A549 (cell line): ENCODE measurements at regions of chr11 and their contacts with region 1.

Region 1: GRCh38 chr11:10735481-10736475 is 15.3 kb upstream of the CTR9 start:
- DNase-seq: peak; percentile 93 to 97
- ATAC-seq: peak; percentile 98 to 99
- H3K4me3 ChIP-seq: peak overlapping the region; percentile 27
- H3K27ac ChIP-seq: peak overlapping the region; percentile 77 to 88
- H3K4me1 ChIP-seq: peaks cover 13% of the 10 kb centered on the region
- CTCF ChIP-seq: peak; percentile 99
- EP300 ChIP-seq: no peak
- POLR2A ChIP-seq: no peak
- RAD21 ChIP-seq: peak; percentile 98 to 100

Region 2: DNA sequence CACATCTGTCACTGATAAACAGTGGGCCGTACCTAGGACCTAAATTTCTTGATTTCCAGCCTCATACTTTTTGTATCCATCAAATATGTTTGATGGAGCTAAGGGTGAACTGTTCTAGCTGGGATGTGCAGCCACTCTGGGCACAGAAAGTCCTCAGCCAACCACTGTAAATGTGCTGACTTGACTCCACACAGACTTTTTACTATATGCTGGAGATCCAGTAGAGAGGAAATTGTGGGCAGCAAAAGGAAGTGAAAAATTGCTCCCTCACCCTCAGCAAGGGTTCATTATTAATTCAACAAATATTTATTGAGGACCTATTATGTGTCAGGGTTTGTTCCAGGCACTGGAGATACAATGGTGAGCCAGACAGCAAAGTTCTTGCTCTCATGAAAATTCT is 334.9 kb before region 1 on chr11:
- CTCF ChIA-PET with region 1: interaction called, 39 read pairs
- POLR2A ChIA-PET with region 1: no interaction called
- DNase-seq: no peak
- ATAC-seq: no peak
- H3K4me3 ChIP-seq: no peak overlapping the region
- H3K27ac ChIP-seq: peak overlapping the region; percentile 18 to 64; a peak in 4 of 6 replicates
- H3K4me1 ChIP-seq: peaks cover 16% of the 10 kb centered on the region
- CTCF ChIP-seq: no peak
- EP300 ChIP-seq: no peak
- POLR2A ChIP-seq: no peak
- RAD21 ChIP-seq: no peak

Region 3: GRCh38 chr11:10514210-10514609 is 221.6 kb before region 1 on chr11:
- CTCF ChIA-PET with region 1: interaction called, 51 read pairs
- POLR2A ChIA-PET with region 1: no interaction called
- DNase-seq: peak in 1 of 2 experiments; percentile 12
- ATAC-seq: no peak
- H3K4me3 ChIP-seq: no peak overlapping the region
- H3K27ac ChIP-seq: no peak overlapping the region
- H3K4me1 ChIP-seq: peaks cover 11% of the 10 kb centered on the region
- CTCF ChIP-seq: peak; percentile 51
- EP300 ChIP-seq: no peak
- POLR2A ChIP-seq: no peak
- RAD21 ChIP-seq: peak; percentile 40 to 66; a peak in 4 of 5 replicates

Region 4: DNA sequence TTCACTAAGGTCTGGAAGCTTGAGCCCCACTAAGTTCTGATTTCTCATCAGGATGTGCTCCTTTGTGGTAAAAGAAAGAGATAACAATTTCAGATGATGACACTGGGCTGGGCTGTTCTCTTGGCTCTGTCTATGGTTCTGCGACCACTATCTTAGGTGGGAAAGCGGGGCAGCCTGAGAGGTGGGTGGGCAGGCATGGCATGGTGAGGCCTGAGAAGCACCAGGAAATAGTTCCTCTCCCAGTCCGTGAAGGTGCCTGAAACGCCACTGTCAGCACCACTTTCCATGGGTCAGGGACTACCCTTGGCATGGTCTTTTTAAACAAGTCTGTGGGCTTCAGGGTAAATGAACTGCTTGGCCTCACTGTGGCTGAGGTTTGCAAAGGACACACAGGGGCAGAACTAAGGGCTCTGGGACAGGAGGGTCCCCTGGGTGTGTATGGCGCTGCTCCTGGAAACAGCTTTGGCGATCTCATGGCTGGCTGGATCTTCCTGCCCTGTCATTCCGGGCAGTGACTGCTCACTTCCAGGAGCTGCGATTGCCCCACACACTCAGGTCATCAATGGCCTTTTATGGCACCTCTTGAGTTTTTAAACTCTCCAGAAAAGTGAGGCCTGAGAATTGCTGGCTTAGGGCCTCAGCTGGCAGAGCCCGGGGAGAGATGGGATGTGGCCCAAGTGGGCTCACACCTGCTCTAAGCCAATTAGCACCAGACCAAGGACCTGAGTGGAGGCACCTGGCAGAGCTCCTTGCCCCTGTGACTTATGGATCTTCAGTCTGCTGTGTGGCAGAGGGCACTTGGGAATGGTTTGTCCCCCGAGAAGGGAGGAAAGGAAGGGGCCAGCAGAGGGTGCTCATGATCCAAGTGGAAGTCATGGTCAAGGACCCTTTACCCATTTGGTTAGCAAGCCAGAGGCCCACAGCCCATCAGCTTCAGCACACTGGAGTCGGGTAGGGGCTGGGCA is 111.7 kb before region 1 on chr11:
- CTCF ChIA-PET with region 1: interaction called, 48 read pairs
- POLR2A ChIA-PET with region 1: no interaction called
- DNase-seq: peak; percentile 46 to 57
- ATAC-seq: peak; percentile 48 to 84; a peak in 3 of 6 replicates
- H3K4me3 ChIP-seq: no peak overlapping the region
- H3K27ac ChIP-seq: peak overlapping the region in 1 of 2 experiments; percentile 52; a peak in 2 of 6 replicates
- H3K4me1 ChIP-seq: no peaks in the 10 kb centered on the region
- CTCF ChIP-seq: peak; percentile 56
- EP300 ChIP-seq: no peak
- POLR2A ChIP-seq: no peak
- RAD21 ChIP-seq: peak; percentile 79 to 82